ENCODE measurements at regions of chr19 and their contacts with region 1.

Region 1: GRCh38 chr19:16185123-16185767 is at the start of gene FAM32A:
- DNase-seq: peak; percentile 98 to 100
- H3K4me3 ChIP-seq: peak within 1 kb of the TSS; percentile 87 to 95
- H3K27ac ChIP-seq: peak within 1 kb of the TSS; percentile 77 to 85
- H3K4me1 ChIP-seq: peaks cover 3 to 17% of the 10 kb centered on the region in 2 donors
- H3K27me3 ChIP-seq: no peaks in the 10 kb centered on the region
- CTCF ChIP-seq: peak; percentile 9 to 37 (median 22)
- total RNA-seq, gene FAM32A: 74.4 TPM

Region 2: DNA sequence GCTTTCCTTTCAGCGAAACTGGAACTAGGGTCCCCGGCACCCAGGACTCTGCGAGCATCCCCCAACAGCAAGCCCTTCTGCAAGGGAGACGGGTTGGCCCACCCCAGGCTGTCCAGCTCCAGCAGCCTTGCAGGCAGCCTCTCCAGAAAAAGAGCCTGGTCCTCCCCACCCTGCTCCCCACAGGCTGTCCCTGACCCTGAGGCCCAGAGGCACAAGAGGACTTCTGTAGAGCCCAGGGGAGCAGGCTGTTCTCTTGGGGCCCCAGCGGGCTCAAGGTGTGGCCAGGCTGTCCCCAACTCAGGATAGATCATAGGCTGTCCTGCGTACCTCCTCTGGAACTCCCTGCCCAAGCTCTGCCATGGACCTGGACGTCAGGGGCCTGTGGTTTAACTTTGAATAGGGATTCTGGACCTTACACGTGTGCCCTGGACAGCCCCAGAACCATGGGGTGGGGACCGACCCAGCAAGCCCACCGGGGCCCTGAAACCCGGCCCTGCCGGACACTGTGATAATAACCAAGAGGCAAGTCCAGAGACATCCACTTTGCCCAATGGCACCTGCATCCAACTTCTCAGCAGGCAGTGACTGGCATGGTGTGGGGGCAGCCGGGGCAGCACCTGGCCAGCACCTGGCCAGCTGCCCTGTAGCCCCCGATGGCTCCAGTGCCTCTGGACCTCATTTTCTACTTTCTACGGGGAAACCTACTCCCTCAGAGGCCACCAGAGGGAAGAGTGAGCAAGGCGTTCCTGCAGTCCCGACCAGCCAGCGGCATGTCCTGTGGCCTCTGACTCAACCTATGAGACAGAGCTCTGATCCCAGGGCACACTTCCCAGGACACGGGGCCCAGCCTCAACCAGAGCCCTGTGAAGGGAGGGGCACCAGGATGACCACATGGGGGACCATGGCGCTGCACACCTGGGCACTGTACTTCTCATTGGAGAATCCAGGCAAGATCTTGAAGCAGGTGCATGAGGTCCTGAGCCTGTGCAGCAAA is 159.8 kb before region 1 on chr19:
- intact Hi-C with region 1: loop called (anchors 1 kb)
- DNase-seq: peak in 1 of 2 donors; percentile 62
- H3K4me3 ChIP-seq: no peak overlapping the region
- H3K27ac ChIP-seq: no peak overlapping the region
- H3K4me1 ChIP-seq: no peaks in the 10 kb centered on the region
- H3K27me3 ChIP-seq: no peaks in the 10 kb centered on the region
- CTCF ChIP-seq: peak in 2 of 3 experiments; percentile 38 to 44

Region 3: GRCh38 chr19:16041299-16041990 is 143.8 kb before region 1 on chr19:
- intact Hi-C with region 1: loop called (anchors 1 kb)
- DNase-seq: peak in 1 of 2 donors; percentile 91
- H3K4me3 ChIP-seq: peak overlapping the region in 1 of 2 donors; percentile 49
- H3K27ac ChIP-seq: peak overlapping the region; percentile 55 to 80
- H3K4me1 ChIP-seq: peaks cover 3 to 12% of the 10 kb centered on the region in 2 donors
- H3K27me3 ChIP-seq: no peaks in the 10 kb centered on the region
- CTCF ChIP-seq: peak; percentile 96 to 99 (median 96)

Region 4: GRCh38 chr19:16111160-16111908 is 73.9 kb before region 1 on chr19 and contains the start of gene RAB8A:
- intact Hi-C with region 1: loop called (anchors 1 kb)
- DNase-seq: peak; percentile 98 to 99
- H3K4me3 ChIP-seq: peak within 1 kb of the TSS; percentile 96 to 97
- H3K27ac ChIP-seq: peak within 1 kb of the TSS; percentile 88 to 91
- H3K4me1 ChIP-seq: peaks cover 16 to 22% of the 10 kb centered on the region in 2 donors
- H3K27me3 ChIP-seq: no peaks in the 10 kb centered on the region
- CTCF ChIP-seq: peak; percentile 94 to 100 (median 94)
- total RNA-seq, gene RAB8A: 35.1 TPM

Region 5: DNA sequence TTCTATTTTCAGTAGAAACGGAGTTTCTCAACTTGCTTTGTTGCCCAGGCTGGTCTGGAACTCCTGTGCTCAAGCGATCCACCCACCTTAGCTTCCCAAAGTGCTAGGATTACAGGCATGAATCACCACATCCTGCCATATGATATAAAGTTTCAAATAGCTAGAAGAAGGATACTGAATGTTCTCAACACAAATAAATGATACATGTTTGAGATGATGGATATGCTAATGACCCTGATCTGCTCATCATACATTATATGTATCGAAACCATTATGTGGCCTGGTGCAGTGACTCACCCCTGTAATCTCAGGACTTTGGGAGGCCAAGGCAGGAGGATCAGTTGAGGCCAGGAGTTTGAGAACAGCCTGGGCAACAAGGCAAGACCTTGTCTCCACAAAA is 23.4 kb before region 1 on chr19:
- intact Hi-C with region 1: no loop called
- DNase-seq: no peak
- H3K4me3 ChIP-seq: no peak overlapping the region
- H3K27ac ChIP-seq: no peak overlapping the region
- H3K4me1 ChIP-seq: no peaks in the 10 kb centered on the region
- H3K27me3 ChIP-seq: no peaks in the 10 kb centered on the region
- CTCF ChIP-seq: no peak

Region 6: GRCh38 chr19:16197622-16198369 is 12.6 kb after region 1 on chr19 and contains the start of gene AP1M1:
- intact Hi-C with region 1: loop called (anchors 1 kb)
- DNase-seq: peak; percentile 91 to 99
- H3K4me3 ChIP-seq: peak within 1 kb of the TSS; percentile 87 to 93
- H3K27ac ChIP-seq: peak within 1 kb of the TSS; percentile 84
- H3K4me1 ChIP-seq: peaks cover 3 to 25% of the 10 kb centered on the region in 2 donors
- H3K27me3 ChIP-seq: no peaks in the 10 kb centered on the region
- CTCF ChIP-seq: no peak
- total RNA-seq, gene AP1M1: 162 TPM

Region 7: GRCh38 chr19:16416991-16417390 is 231.7 kb after region 1 on chr19:
- intact Hi-C with region 1: no loop called
- DNase-seq: no peak
- H3K4me3 ChIP-seq: no peak overlapping the region
- H3K27ac ChIP-seq: no peak overlapping the region
- H3K4me1 ChIP-seq: no peaks in the 10 kb centered on the region
- H3K27me3 ChIP-seq: no peaks in the 10 kb centered on the region
- CTCF ChIP-seq: no peak